Dendritic cell treated with granulocyte-macrophage colony-stimulating factor and Interleukin-4, amounts not matched to agents 40 ng/mL and 50 ng/mL, for 4 days (primary cell): ENCODE measurements at regions of chr5 and their contacts with region 1.

Region 1: GRCh38 chr5:93800988-93801811 is 59.8 kb upstream of the POU5F2 start:
- H3K4me3 Mint-ChIP-seq: no peak overlapping the region
- H3K27ac Mint-ChIP-seq: no peak overlapping the region
- H3K4me1 Mint-ChIP-seq: no peaks in the 10 kb centered on the region
- H3K27me3 Mint-ChIP-seq: no peaks in the 10 kb centered on the region

Region 2: DNA sequence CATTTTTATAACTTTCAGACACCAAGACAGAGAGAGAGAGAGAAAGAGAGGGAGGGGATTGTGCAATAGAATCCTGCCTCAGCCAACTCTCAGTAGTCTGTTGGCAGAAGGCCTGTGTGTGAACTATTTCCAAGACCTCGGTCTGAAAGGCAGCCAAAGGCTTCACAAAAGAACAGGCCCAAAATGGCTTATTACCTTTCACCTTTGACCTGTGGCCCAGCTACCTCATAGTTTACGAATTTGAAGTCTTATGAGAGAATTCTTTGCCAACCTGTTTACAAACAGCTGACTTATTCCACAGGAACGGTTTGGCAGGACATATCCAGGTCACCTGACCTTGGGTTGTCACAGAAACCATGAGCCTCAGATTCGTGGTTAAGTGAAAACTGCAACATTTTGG is 268.8 kb before region 1 on chr5:
- intact Hi-C with region 1: no loop called
- H3K4me3 Mint-ChIP-seq: no peak overlapping the region
- H3K27ac Mint-ChIP-seq: no peak overlapping the region
- H3K4me1 Mint-ChIP-seq: no peaks in the 10 kb centered on the region
- H3K27me3 Mint-ChIP-seq: no peaks in the 10 kb centered on the region

Region 3: GRCh38 chr5:93582677-93583438 is 218.3 kb before region 1 on chr5 and contains the start of gene NR2F1:
- intact Hi-C with region 1: loop called (anchors 1 kb)
- H3K4me3 Mint-ChIP-seq: peak within 1 kb of the TSS; percentile 73
- H3K27ac Mint-ChIP-seq: no peak within 1 kb of the TSS
- H3K4me1 Mint-ChIP-seq: peaks cover 42% of the 10 kb centered on the region
- H3K27me3 Mint-ChIP-seq: peaks cover 22% of the 10 kb centered on the region